H1 (cell line): ENCODE measurements at regions of chr1 and their contacts with region 1.

Region 1: DNA sequence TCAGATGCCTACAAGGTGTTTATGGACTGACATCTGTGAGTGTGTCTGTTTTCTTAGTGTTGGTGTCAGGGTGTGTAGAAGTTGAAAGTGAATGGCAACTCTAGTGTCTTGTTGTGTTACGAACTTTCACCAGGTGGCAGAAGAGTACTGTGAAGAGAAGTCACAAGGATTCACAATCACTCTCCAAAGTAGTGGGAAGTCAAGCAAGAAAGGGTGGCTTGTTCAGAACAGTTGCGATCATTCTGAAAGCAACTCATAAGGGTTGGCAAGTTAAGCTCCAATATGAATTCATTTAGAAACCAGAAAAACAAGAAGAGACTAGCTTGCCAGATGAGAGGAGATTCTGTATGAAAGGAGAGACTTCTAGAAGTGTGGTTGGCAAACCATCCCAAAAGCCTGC is 86.1 kb downstream of the FASLG start:
- DNase-seq: no peak
- H3K4me3 ChIP-seq: no peak overlapping the region
- H3K27ac ChIP-seq: no peak overlapping the region
- H3K4me1 ChIP-seq: no peaks in the 10 kb centered on the region
- H3K27me3 ChIP-seq: no peaks in the 10 kb centered on the region
- CTCF ChIP-seq: peak in 2 of 3 experiments; percentile 67 to 75; a peak in 3 of 4 replicates
- EP300 ChIP-seq: no peak
- POLR2A ChIP-seq: no peak
- RAD21 ChIP-seq: peak; percentile 94 to 96

Region 2: GRCh38 chr1:172764378-172764777 is 19.4 kb after region 1 on chr1:
- CTCF ChIA-PET with region 1: interaction called, 13 read pairs
- POLR2A ChIA-PET with region 1: no interaction called
- DNase-seq: no peak
- H3K4me3 ChIP-seq: no peak overlapping the region
- H3K27ac ChIP-seq: no peak overlapping the region
- H3K4me1 ChIP-seq: no peaks in the 10 kb centered on the region
- H3K27me3 ChIP-seq: no peaks in the 10 kb centered on the region
- CTCF ChIP-seq: no peak
- EP300 ChIP-seq: no peak
- POLR2A ChIP-seq: no peak
- RAD21 ChIP-seq: no peak

Region 3: DNA sequence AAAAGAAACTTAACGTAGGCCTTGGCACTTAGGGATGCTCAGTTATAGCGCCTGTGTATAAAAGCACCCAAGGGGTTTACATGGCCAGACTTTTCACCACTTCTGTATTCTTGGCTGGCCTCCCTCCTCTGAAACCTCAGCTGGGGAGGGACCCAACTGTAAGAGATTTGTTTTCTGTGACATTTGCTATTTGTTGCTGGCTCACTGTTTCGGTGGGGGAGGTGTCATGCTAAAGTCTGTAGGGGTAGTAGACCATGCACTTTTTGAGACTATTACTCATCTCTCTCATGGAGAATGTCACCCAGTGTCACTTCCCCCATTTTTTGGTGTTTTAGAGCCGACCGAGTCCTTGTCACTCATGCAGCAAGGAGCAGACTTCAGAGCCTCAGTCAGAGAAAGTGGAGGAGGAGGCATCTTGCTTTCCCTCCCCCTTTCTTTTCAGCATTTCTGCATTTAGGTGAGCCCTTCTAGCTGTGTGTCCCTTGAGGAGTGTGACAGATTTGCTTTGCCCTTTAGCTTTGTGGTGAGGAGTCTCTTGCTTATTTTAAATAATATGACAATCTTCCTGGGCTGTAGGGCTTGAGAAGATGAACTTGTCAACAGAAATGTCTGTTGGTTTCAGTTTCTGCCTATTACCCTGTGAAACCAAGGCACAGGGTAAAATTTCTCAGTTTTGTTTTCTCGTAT is 74.0 kb after region 1 on chr1:
- CTCF ChIA-PET with region 1: interaction called, 10 read pairs
- POLR2A ChIA-PET with region 1: no interaction called
- DNase-seq: no peak
- H3K4me3 ChIP-seq: no peak overlapping the region
- H3K27ac ChIP-seq: no peak overlapping the region
- H3K4me1 ChIP-seq: no peaks in the 10 kb centered on the region
- H3K27me3 ChIP-seq: no peaks in the 10 kb centered on the region
- CTCF ChIP-seq: no peak
- EP300 ChIP-seq: no peak
- POLR2A ChIP-seq: no peak
- RAD21 ChIP-seq: no peak

Region 4: GRCh38 chr1:173202430-173203145 is 457.6 kb after region 1 on chr1:
- CTCF ChIA-PET with region 1: interaction called, 147 read pairs
- POLR2A ChIA-PET with region 1: no interaction called
- DNase-seq: no peak
- H3K4me3 ChIP-seq: no peak overlapping the region
- H3K27ac ChIP-seq: no peak overlapping the region
- H3K4me1 ChIP-seq: peaks cover 0 to 4% (median 0%) of the 10 kb centered on the region in 4 experiments; a peak in 1 of 7 replicates
- H3K27me3 ChIP-seq: peaks cover 0 to 1% (median under 1%) of the 10 kb centered on the region in 4 experiments; a peak in 4 of 7 replicates
- CTCF ChIP-seq: peak in 2 of 3 experiments; percentile 56 to 61; a peak in 2 of 4 replicates
- EP300 ChIP-seq: no peak
- POLR2A ChIP-seq: no peak
- RAD21 ChIP-seq: peak; percentile 88 to 89